Left cardiac atrium (tissue), 4 donors: ENCODE measurements at regions of chr17 and their contacts with region 1.

Region 1: GRCh38 chr17:77145612-77146245 is 5.0 kb downstream of the SEC14L1 start:
- DNase-seq: peak; percentile 77
- ATAC-seq: peak; percentile 37 to 61

Region 2: GRCh38 chr17:77109764-77110359 is 35.9 kb before region 1 on chr17:
- intact Hi-C with region 1: no loop called
- DNase-seq: no peak
- ATAC-seq: peak; percentile 67 to 81

Region 3: GRCh38 chr17:77208217-77208808 is 62.6 kb after region 1 on chr17:
- intact Hi-C with region 1: loop called in 1 of 2 experiments (anchors 2 kb)
- DNase-seq: no peak
- ATAC-seq: peak; percentile 67 to 72